HAP-1 (cell line): ENCODE measurements at regions of chr11 and their contacts with region 1.

Region 1: GRCh38 chr11:62905927-62906531 is 15.1 kb downstream of the CHRM1 start:
- DNase-seq: peak; percentile 72 to 88
- H3K4me3 ChIP-seq: no peak overlapping the region
- H3K4me1 ChIP-seq: no peaks in the 10 kb centered on the region
- H3K27me3 ChIP-seq: peaks cover 11% of the 10 kb centered on the region

Region 2: DNA sequence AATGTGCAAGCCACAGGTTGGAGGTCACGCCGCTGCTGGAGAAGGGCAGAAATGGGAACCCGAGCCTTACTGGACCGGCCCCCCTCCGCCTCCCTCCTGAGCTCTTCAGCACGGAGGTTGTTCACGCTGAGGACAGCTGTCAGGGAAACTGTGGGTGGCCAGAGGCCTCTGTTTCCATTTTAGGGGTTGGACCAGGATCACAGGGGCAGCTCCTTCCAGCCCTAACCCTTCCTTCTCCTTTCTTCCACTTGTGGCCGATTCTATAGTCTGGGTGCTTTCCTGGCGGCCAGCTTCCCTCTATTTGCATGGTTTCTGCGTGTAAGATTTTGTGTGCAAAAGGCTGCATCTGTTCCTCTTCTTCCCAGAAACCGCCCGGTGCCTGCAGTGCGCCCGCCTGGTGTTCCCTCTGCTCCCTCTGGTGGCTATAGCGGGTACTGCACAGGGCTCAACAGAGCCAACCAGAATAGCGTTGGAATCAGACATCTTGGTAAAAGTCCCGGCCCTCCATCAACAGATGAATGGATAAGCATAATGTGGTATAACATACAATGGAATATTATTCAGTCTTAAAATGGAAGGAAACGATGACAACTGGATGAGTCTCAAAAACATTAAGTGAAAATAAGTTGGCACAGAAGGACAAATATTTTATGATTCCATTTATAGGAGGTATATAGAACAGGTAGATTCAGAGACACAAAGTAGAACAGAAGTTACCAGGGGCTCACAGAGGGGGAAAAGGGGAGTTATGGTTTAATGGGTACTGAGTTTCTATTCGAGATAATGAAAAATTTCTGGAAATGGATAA is 118.0 kb after region 1 on chr11:
- in situ Hi-C with region 1: loop called (anchors 5 kb)
- DNase-seq: peak; percentile 70 to 94
- H3K4me3 ChIP-seq: no peak overlapping the region
- H3K4me1 ChIP-seq: peaks cover 3% of the 10 kb centered on the region; the same call in 1 of the 2 replicates
- H3K27me3 ChIP-seq: no peaks in the 10 kb centered on the region; the same call in 1 of the 2 replicates

Region 3: GRCh38 chr11:63212742-63213141 is 306.7 kb after region 1 on chr11:
- in situ Hi-C with region 1: loop called (anchors 5 kb)
- DNase-seq: peak; percentile 32 to 40
- H3K4me3 ChIP-seq: no peak overlapping the region
- H3K4me1 ChIP-seq: no peaks in the 10 kb centered on the region
- H3K27me3 ChIP-seq: 0 out of 2 replicates have a peak, but pooled peaks cover 2% of the 10 kb centered on the region

Region 4: DNA sequence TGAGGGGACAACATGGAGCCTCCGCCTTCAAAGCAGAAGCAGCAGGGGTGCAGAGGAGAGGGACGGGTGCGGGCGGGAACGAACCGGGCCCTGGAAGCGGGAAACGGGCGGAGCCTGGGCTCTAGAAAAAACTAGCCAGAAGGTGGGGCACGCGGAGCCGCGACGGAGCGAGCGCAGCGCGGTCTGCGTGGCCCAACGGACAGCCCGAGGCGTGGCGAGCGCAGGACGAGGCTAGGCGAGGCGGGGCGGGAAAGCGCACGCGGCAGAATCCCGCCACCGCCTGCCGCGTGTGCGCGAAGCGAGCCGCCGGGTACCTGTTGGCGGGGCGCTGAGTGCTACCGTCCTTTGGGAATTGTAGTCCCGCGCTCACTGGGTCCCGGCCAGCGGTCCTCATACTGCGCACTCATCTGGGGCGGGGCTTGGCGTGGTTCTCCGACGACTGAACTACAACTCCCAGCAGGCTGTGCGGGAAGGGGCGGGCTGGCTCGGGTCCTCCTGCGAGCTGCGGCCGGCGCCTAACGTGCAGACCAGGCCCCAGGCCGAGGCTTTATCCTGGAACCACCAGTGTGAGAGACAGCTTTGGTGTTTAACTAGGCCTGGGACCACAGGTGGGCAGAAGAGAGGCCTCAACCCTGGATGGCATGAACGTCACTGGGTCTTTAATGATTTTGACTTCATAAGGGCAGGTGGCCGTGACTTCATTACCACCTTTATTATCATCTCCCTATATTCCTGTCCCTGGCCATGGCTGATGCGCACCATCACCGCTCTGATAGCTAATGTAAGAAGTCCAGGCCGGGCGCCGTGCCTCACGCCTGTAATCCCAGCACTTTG is 765.5 kb after region 1 on chr11 and contains the start of gene ATL3:
- in situ Hi-C with region 1: loop called (anchors 25 kb)
- DNase-seq: peak; percentile 95 to 99
- H3K4me3 ChIP-seq: peak within 1 kb of the TSS; percentile 35
- H3K4me1 ChIP-seq: peaks cover 21% of the 10 kb centered on the region
- H3K27me3 ChIP-seq: no peaks in the 10 kb centered on the region